WTC11 (cell line): ENCODE measurements at regions of chr1 and their contacts with region 1.

Region 1: DNA sequence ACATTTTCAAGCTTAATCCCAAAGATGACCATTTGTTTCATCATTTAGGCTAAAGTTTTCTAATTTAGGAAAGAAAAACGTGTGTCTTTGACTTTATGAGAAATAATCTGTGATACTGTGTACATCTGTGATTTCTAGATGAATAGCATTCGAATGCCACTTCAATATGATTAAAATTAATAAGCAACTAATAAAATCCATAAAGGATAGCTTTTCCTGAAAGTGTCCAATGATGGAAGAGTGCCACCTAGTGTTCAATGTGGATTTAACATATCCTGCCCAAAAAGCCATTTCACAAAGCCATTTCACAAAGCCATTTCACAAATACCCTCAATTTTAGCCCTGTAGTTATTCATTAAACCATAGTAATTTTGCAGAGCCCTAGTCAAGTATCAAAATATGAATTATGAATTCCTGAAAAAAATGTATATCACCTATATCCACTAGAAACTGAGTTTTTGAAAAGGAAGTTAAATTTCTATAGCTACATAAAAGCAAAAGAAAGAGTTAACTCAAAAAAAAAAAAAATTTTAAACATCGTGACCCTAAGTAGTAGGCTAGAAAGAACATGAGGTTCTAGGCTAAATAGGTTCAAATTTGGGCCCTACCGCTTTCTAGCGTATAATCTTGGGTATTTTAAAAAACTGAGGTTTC is 19.1 kb downstream of the NME7 start:
- DNase-seq: no peak
- ATAC-seq: no peak
- H3K4me3 Mint-ChIP-seq: no peak overlapping the region
- H3K27ac Mint-ChIP-seq: no peak overlapping the region
- H3K4me1 Mint-ChIP-seq: no peaks in the 10 kb centered on the region
- H3K27me3 Mint-ChIP-seq: no peaks in the 10 kb centered on the region
- CTCF ChIP-seq: peak; percentile 63; the same call in 1 of the 2 replicates

Region 2: DNA sequence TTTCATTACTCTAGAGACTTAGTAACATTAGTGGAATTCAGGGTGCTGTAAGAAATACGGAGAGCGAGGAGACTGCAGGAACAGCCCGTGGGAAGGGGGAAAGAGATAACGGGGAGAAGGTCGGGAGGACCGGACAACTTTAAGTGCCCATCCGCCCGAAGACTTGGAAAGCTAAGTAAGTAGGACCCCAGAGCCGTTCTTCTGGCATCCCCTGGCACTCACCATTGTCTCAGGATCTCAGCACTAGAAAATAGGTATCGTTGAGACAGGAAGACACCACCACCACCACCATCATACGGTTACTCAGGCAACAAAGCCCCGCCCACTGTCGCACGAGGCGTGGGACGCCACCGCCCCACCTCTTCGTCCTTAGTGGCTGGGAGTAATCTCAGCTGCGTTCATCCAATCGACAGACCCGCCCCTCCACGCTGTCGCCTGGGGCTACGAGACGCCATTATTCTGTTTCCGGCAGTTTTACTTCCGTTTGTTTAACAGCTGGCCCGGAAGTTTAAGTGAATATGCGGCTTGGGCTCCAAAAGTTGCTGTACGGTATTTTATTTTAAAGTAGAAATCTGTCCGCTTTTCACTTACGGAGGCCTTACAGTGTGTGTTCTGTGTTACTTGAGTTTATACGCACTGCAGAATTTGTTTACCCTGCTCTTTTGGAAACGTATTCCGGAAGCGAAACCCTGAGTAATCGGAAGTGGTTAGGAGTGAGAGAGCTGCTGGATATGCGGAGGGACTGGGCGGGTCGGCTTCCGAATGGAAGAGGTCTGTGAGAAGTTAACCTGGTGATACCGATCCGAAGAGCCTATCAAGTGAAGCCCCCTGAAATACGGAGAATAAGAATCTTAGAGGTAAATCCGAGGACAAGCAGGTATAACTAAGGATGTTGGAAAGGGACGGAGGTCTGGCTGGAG is 19.2 kb after region 1 on chr1 and contains the starts of genes BLZF1 and NME7:
- CTCF ChIA-PET with region 1: interaction called, 10 read pairs
- POLR2A ChIA-PET with region 1: no interaction called
- DNase-seq: peak; percentile 94
- ATAC-seq: peak; percentile 99
- H3K4me3 Mint-ChIP-seq: no peak within 1 kb of the TSS
- H3K27ac Mint-ChIP-seq: no peak within 1 kb of the TSS
- H3K4me1 Mint-ChIP-seq: no peaks in the 10 kb centered on the region; the same call in 1 of the 2 replicates
- H3K27me3 Mint-ChIP-seq: no peaks in the 10 kb centered on the region
- CTCF ChIP-seq: no peak
- total RNA-seq, gene BLZF1: 8.3 to 10.8 TPM (median 9.2 TPM) in 3 replicates
- total RNA-seq, gene NME7: 13.8 to 20.3 TPM (median 18.8 TPM) in 3 replicates